Vagina (tissue), 2 donors: ENCODE measurements at regions of chr1 and their contacts with region 1.

Region 1: DNA sequence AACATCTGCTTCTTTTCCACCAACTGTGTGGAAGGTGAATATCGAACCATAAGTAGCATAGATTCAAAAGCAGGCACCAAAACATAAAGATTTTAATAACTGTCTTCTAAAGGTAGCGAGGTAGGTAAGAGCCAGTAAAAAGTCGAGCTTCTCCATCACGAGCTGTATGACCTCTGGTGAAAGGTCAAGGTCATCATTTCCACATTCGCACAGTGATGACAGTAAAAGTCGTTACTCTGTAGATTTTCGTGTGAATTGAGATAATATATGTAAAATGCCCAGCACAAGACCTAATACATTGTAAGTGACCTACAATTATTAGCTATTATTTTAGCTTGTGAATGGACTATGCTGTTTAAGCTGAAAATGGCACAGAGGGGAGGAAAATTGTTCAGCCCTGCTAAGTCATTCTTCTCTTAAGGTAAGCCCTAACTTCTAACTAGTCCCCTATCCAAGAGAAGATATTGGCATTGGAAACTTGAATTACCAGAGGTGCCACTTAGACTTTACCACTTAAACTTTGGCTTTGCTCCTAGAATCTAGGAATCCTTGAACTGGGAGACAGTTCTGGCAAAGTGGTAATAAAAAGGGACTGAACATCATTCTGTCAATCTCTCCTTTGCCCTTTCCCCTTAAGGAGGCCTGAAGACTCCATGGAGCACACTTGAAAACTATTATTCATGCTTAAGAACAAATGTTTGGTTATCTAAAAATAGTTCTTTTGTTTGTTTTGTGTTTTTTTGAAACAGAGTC is 8.3 kb downstream of the ATP1A4 start:
- DNase-seq: no peak
- H3K4me3 ChIP-seq: no peak overlapping the region
- H3K27ac ChIP-seq: no peak overlapping the region
- H3K4me1 ChIP-seq: no peaks in the 10 kb centered on the region
- H3K27me3 ChIP-seq: no peaks in the 10 kb centered on the region
- CTCF ChIP-seq: no peak
- POLR2A ChIP-seq: no peak

Region 2: DNA sequence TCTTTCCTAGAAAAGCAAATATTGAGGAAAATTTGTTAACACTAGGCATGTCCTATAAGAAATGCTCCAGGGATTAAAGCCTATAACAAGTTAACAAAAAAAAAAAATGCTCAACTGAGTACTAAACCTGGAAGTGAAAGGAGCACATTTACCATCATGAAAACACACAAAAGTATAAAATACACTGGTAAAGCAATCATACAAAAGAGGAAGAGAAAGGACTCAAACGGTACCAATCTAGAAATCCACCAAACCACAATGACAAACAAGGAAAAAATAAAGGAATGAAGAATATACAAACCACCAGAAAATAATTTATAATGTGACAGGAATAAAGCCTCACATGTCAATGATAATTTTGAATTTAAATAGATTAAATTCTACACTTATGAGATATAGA is 1784.8 kb before region 1 on chr1:
- intact Hi-C with region 1: no loop called
- DNase-seq: no peak
- H3K4me3 ChIP-seq: no peak overlapping the region
- H3K27ac ChIP-seq: no peak overlapping the region
- H3K4me1 ChIP-seq: no peaks in the 10 kb centered on the region
- H3K27me3 ChIP-seq: no peaks in the 10 kb centered on the region
- CTCF ChIP-seq: no peak
- POLR2A ChIP-seq: no peak

Region 3: DNA sequence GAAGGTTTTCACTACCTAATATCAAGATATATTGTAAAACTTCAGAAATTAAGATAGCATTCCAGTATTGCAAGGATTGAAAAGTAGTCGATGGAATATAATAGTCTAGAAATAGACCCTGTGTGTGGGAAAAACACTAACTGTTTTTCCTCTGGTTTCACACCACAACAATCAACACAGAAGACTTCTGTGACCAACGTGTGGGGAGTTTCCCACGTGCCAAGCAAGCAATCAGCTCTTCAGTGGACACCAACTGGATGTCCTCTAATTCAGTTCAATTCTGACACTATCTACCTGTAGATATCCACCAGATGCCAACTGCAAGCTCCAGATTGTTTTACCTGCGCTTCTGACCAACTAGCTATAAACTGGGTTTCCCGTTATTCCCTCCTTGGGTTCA is 690.9 kb after region 1 on chr1:
- intact Hi-C with region 1: loop called (anchors 5 kb)
- DNase-seq: no peak
- H3K4me3 ChIP-seq: no peak overlapping the region
- H3K27ac ChIP-seq: no peak overlapping the region
- H3K4me1 ChIP-seq: no peaks in the 10 kb centered on the region
- H3K27me3 ChIP-seq: no peaks in the 10 kb centered on the region
- CTCF ChIP-seq: no peak
- POLR2A ChIP-seq: no peak

Region 4: DNA sequence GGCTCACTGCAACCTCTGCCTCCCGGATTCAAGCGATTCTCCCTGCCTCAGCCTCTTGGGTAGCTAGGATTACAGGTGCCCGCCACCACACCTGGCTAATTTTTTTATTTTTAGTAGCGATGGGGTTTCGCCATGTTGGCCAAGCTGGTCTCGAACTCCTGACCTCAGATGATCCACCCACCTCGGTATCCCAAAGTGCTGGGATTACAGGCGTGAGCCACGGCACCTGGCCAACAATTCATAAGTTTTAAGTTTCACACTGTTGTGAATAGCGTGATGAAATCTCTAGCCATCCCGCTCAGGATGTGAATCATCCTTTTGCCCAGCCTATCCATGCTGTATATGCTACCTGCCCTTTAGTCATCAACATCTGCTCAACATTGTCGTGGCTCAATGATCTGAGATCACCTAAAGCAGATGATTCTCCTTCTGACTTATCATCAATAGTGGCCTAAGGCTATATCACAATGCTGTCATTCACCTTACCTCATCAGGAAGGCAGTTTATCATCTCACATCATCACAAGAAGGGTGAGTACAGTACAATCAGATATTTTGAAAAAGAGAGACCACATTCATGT is 955.6 kb after region 1 on chr1:
- intact Hi-C with region 1: no loop called
- DNase-seq: no peak
- H3K4me3 ChIP-seq: no peak overlapping the region
- H3K27ac ChIP-seq: no peak overlapping the region
- H3K4me1 ChIP-seq: peaks cover 47% of the 10 kb centered on the region
- H3K27me3 ChIP-seq: no peaks in the 10 kb centered on the region
- CTCF ChIP-seq: no peak
- POLR2A ChIP-seq: no peak